ENCODE measurements at regions of chr2 and their contacts with region 1.

Region 1: GRCh38 chr2:44361330-44362206 is at the starts of genes CAMKMT and PREPL:
- DNase-seq: peak; percentile 98
- ATAC-seq: peak; percentile 92
- H3K4me3 Mint-ChIP-seq: peak within 1 kb of the TSS; percentile 89
- H3K27ac Mint-ChIP-seq: peak within 1 kb of the TSS; percentile 100
- H3K4me1 Mint-ChIP-seq: peaks cover 50% of the 10 kb centered on the region
- H3K27me3 Mint-ChIP-seq: no peaks in the 10 kb centered on the region
- CTCF ChIP-seq: no peak
- total RNA-seq, gene CAMKMT: 12.1 to 14.1 TPM
- total RNA-seq, gene PREPL: 25.0 to 25.2 TPM

Region 2: DNA sequence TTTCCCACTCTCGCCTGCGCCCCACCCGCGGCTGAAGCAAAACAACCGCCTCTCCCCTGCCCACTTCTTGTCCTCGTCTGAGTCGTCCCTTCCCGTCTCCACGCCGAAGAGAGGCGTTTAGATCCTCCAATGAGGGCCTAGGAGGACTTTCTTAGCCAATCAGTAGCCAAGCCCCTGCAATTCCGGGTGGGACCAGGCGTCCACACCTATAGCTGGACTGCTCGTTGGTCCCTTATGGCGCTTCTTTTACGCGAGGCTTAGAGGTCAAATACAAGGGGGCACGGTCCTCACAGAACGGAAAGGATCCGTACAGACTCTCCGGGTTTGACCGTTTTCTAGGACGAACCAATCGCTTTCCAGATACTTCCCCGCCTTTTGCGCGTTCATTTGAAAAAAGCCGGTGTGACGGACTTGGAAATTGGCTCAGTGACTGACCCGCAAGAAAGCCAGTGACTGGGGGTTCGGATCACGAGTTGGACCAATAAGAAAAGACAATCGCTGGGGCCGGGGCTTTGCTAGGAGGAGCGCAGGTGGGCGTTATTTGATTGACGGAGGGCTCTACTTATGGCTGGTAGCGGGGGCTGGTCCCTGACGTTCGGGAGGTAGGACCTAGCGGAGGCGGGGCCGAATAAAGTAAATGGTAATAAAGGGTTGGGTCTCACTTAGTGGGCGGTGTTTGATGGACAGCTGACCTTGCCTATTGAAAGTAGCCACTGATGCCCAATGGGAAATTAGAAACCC is 193.5 kb before region 1 on chr2:
- CTCF ChIA-PET with region 1: no interaction called
- POLR2A ChIA-PET with region 1: interaction called, 11 read pairs
- intact Hi-C with region 1: loop called (anchors 5 kb)
- DNase-seq: peak; percentile 100
- ATAC-seq: peak; percentile 80
- H3K4me3 Mint-ChIP-seq: peak overlapping the region; percentile 89
- H3K27ac Mint-ChIP-seq: peak overlapping the region; percentile 99
- H3K4me1 Mint-ChIP-seq: peaks cover 27% of the 10 kb centered on the region
- H3K27me3 Mint-ChIP-seq: no peaks in the 10 kb centered on the region
- CTCF ChIP-seq: no peak

Region 3: GRCh38 chr2:44314362-44314761 is 47.2 kb before region 1 on chr2:
- CTCF ChIA-PET with region 1: no interaction called
- POLR2A ChIA-PET with region 1: no interaction called
- intact Hi-C with region 1: no loop called
- DNase-seq: no peak
- ATAC-seq: no peak
- H3K4me3 Mint-ChIP-seq: no peak overlapping the region
- H3K27ac Mint-ChIP-seq: no peak overlapping the region
- H3K4me1 Mint-ChIP-seq: no peaks in the 10 kb centered on the region
- H3K27me3 Mint-ChIP-seq: no peaks in the 10 kb centered on the region
- CTCF ChIP-seq: no peak

Region 4: DNA sequence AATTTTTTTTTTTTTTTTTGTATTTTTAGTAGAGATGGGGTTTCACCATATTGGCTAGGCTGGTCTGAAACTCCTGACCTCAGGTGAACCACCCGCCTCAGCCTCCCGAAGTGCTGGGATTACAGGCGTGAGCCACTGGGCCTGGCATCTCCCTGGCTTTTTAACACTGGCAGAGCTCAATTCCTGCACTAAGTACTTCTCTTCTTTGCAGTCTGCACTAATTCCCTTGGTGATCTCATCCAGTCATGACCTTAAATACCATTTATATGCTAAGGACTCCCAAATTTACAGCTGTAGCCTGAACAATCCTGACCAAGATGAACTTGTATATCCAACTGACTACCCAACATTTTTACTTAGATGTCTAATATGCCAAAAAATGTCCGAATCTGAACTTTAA is 10.5 kb before region 1 on chr2:
- CTCF ChIA-PET with region 1: interaction called, 9 read pairs
- POLR2A ChIA-PET with region 1: interaction called, 20 read pairs
- intact Hi-C with region 1: no loop called
- DNase-seq: no peak
- ATAC-seq: no peak
- H3K4me3 Mint-ChIP-seq: no peak overlapping the region
- H3K27ac Mint-ChIP-seq: no peak overlapping the region
- H3K4me1 Mint-ChIP-seq: peaks cover 22% of the 10 kb centered on the region
- H3K27me3 Mint-ChIP-seq: no peaks in the 10 kb centered on the region
- CTCF ChIP-seq: no peak

Region 5: DNA sequence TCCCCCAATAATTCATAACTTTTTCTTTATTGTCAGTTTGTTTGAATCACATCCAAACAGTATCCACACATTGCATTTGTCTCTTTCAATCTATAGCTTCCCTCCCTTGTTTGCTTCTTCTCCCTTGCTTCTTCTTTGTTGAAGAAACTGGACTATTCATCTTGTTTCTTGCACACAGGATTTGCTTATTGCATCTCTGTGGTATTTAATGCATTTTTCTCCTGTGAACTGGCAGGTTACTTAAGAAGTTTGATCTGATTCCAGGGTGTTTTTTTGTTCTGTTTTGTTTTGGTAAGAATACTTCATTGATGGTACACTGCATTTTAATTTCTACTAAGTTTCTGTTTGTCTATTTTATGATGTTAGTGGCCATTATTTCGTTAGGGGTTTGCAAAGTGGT is 167.0 kb after region 1 on chr2:
- CTCF ChIA-PET with region 1: no interaction called
- POLR2A ChIA-PET with region 1: no interaction called
- intact Hi-C with region 1: no loop called
- DNase-seq: no peak
- ATAC-seq: no peak
- H3K4me3 Mint-ChIP-seq: no peak overlapping the region
- H3K27ac Mint-ChIP-seq: no peak overlapping the region
- H3K4me1 Mint-ChIP-seq: peaks cover 2% of the 10 kb centered on the region
- H3K27me3 Mint-ChIP-seq: no peaks in the 10 kb centered on the region
- CTCF ChIP-seq: no peak

Measured in activated CD8-positive, alpha-beta T cell treated with anti-CD3 and anti-CD28 coated beads for 36 hours (primary cell).